Heart right ventricle (tissue), 16 donors: ENCODE measurements at regions of chr12 and their contacts with region 1.

Region 1: DNA sequence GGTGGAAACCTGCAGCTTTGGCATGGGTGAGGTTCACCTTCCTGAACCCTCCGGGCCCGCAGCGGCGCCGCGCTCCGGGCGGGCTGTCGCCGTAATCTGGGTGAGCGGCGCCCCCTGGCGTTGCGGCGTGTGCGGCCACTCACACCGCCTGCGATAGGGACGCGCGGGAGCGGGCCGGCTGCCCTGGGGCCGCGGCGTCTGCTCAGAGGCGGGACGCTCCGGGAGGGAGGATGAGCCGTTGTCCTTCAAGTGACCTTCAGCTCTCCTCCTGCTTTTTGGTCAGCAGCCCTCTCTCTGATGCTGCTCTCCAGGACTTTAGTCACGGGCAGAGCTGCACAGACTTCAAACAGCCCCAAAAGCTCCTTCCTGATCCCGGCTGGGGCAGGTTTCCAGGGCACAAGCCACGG is 211.7 kb upstream of the FKBP4 start:
- DNase-seq: peak; percentile 58 to 82
- ATAC-seq: peak; percentile 82 to 94 (median 89)
- H3K4me3 ChIP-seq: peak overlapping the region in 4 of 10 donors; percentile 12 to 25 (median 20)
- H3K27ac ChIP-seq: peak overlapping the region in 6 of 10 donors; percentile 3 to 60 (median 46)
- H3K4me1 ChIP-seq: peaks cover 0 to 21% (median 12%) of the 10 kb centered on the region in 9 donors
- H3K27me3 ChIP-seq: no peaks in the 10 kb centered on the region
- CTCF ChIP-seq: peak; percentile 79 to 97 (median 90)

Region 2: GRCh38 chr12:1795785-1796514 is 787.1 kb before region 1 on chr12:
- intact Hi-C with region 1: loop called in 5 of 10 experiments (anchors 10 kb)
- DNase-seq: peak; percentile 91 to 96
- ATAC-seq: peak; percentile 92 to 96 (median 94)
- H3K4me3 ChIP-seq: peak overlapping the region; percentile 24 to 75 (median 62)
- H3K27ac ChIP-seq: peak overlapping the region; percentile 66 to 98 (median 86)
- H3K4me1 ChIP-seq: peaks cover 3 to 58% (median 38%) of the 10 kb centered on the region in 9 donors
- H3K27me3 ChIP-seq: no peaks in the 10 kb centered on the region
- CTCF ChIP-seq: peak; percentile 93 to 100 (median 99)

Region 3: GRCh38 chr12:1972856-1973317 is 610.2 kb before region 1 on chr12:
- intact Hi-C with region 1: loop called in 1 of 10 experiments (anchors 10 kb)
- DNase-seq: peak; percentile 24 to 44
- ATAC-seq: peak; percentile 61 to 83 (median 74)
- H3K4me3 ChIP-seq: peak overlapping the region in 9 of 10 donors; percentile 27 to 58 (median 49)
- H3K27ac ChIP-seq: peak overlapping the region; percentile 70 to 94 (median 84)
- H3K4me1 ChIP-seq: peaks cover 0 to 44% (median 15%) of the 10 kb centered on the region in 9 donors
- H3K27me3 ChIP-seq: no peaks in the 10 kb centered on the region
- CTCF ChIP-seq: no peak

Region 4: DNA sequence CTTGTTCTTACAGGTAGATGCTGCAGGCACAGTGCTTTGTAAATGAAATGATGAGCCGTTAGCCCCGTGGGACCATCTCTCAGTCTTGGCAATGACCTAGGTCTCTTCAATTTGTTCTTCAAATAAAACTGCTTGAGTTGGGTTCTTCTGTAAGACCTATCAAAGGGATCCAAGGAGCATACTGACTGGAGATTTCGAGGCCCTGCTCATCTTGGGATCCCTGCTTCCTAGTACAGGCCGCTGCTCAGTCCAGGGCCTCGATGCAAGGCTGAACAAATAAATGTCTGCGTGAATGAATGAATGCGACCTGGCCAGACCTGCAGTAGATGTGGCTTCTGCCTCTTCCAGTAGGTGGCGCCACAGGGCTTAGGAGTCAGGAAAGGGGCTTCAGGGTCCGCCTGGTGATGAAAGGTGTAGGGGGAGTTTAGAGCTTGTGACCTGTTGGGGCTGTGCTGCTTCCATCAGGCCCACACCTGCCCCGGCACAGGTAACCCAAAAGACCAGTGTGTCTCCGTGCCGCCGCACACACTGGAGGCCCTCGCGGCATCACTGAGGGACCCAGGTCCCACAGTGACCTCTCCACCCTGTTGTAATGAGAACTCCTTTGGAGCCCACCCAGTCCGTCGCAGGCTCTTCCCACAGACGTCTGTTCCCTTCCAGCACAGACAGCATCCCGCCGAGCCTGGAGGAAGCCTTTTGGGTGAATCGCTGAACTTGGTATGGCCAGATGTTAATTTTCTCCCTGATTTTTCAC is 525.9 kb before region 1 on chr12:
- intact Hi-C with region 1: loop called in 8 of 10 experiments (anchors 5 to 10 kb)
- DNase-seq: peak; percentile 66 to 69
- ATAC-seq: peak in 6 of 8 donors; percentile 9 to 37 (median 23)
- H3K4me3 ChIP-seq: peak overlapping the region in 3 of 10 donors; percentile 5 to 9 (median 8)
- H3K27ac ChIP-seq: peak overlapping the region in 8 of 10 donors; percentile 17 to 68 (median 46)
- H3K4me1 ChIP-seq: peaks cover 5 to 85% (median 43%) of the 10 kb centered on the region in 9 donors
- H3K27me3 ChIP-seq: peaks cover 0 to 37% (median 0%) of the 10 kb centered on the region in 7 donors
- CTCF ChIP-seq: peak; percentile 55 to 80 (median 73)

Region 5: GRCh38 chr12:2301531-2302461 is 281.3 kb before region 1 on chr12:
- intact Hi-C with region 1: loop called in 5 of 10 experiments (anchors 5 to 10 kb)
- DNase-seq: peak; percentile 68 to 71
- ATAC-seq: peak; percentile 40 to 83 (median 76)
- H3K4me3 ChIP-seq: no peak overlapping the region
- H3K27ac ChIP-seq: peak overlapping the region; percentile 21 to 84 (median 63)
- H3K4me1 ChIP-seq: peaks cover 15 to 97% (median 68%) of the 10 kb centered on the region in 9 donors
- H3K27me3 ChIP-seq: no peaks in the 10 kb centered on the region
- CTCF ChIP-seq: no peak

Region 6: DNA sequence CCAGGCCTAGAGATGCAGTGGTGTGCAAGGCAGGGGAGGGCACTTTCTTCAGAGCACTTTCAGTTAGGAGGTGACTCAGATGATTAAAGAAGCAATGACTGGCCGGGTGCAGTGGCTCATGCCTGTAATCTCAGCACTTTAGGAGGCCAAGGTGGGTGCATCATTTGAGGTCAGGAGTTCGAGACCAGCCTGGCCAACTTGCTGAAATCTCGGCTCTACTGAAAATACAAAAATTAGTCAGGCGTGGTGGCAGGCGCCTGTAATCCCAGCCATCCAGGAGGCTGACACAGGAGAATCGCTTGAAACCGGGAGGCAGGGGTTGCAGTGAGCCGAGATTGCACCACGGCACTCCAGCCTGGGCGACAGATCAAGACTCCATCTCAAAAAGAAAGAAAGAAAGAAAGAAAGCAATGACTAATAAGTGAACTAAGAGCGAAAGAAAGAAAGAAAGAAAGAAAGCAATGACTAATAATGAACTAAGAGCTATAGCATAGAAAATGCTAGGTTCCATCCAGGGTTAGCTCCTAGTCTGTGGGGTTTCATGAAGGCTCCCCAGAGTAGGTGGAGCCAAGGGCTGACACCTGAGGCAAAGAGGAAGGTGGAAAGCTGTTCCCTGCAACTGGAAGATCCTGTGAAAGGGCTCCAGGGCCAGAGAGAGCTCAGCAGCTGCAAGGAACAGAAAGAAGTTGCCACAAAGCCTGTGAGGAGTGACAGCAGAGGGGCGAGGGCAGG is 195.8 kb before region 1 on chr12:
- intact Hi-C with region 1: loop called in 3 of 10 experiments (anchors 5 to 10 kb)
- DNase-seq: no peak
- ATAC-seq: no peak
- H3K4me3 ChIP-seq: no peak overlapping the region
- H3K27ac ChIP-seq: peak overlapping the region in 2 of 10 donors; percentile 14 to 24
- H3K4me1 ChIP-seq: peaks cover 17 to 88% (median 72%) of the 10 kb centered on the region in 9 donors
- H3K27me3 ChIP-seq: no peaks in the 10 kb centered on the region
- CTCF ChIP-seq: no peak